ENCODE measurements at regions of chr5 and their contacts with region 1.

Region 1: DNA sequence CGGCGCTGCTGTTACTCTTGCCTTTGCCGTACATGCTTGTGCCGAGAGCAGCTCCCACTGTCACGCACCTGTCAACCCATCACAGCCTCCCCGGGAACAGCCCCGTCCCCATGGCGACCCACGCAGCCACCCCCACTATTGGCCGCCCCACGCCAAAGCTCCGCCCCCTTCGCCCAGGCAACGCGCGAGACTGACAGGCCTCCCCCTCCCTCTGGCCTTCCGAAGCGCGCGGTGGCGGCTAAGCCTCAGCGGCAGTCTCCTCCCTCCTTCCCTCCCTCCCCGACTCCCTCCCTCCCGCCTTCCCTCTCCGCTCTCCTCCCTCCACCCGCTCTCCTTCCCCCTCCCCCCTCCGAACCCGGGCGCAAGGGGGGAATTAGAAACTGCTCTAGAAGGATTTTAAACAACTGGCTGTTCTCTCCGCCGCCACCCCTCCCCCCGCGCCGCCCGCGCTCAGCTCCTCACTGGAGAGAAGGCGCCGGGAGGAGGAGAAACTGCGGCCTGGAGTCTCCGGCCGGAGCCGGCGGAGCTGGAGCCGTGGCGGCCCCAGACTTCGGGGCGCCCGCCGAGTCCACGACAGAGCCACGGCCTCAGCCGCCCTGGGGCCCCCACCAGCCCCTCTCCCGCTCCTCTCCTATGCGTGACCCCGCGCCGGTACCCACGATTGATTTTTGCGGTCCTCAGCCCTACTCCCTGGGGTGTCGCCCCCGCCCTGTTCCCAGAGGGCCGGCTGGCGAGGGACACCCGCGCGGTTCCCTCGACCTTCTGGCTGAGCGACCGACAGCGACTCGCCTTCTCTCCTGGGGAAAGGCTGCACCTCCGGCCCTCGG is at the start of gene SSBP2:
- DNase-seq: peak; percentile 100
- H3K4me3 ChIP-seq: peak within 1 kb of the TSS; percentile 94
- H3K27ac ChIP-seq: peak within 1 kb of the TSS; percentile 100
- H3K4me1 ChIP-seq: peaks cover 71% of the 10 kb centered on the region
- H3K27me3 ChIP-seq: no peaks in the 10 kb centered on the region
- CTCF ChIP-seq: no peak
- total RNA-seq, gene SSBP2: 40.7 TPM

Region 2: GRCh38 chr5:81971712-81972495 is 220.7 kb after region 1 on chr5 and contains the start of gene ATG10:
- intact Hi-C with region 1: loop called (anchors 5 kb)
- DNase-seq: peak; percentile 92
- H3K4me3 ChIP-seq: peak within 1 kb of the TSS; percentile 80
- H3K27ac ChIP-seq: peak within 1 kb of the TSS; percentile 97
- H3K4me1 ChIP-seq: peaks cover 14% of the 10 kb centered on the region
- H3K27me3 ChIP-seq: no peaks in the 10 kb centered on the region
- CTCF ChIP-seq: no peak
- total RNA-seq, gene ATG10: 6.0 TPM